Testis (tissue), 5 donors: ENCODE measurements at regions of chr9 and their contacts with region 1.

Region 1: DNA sequence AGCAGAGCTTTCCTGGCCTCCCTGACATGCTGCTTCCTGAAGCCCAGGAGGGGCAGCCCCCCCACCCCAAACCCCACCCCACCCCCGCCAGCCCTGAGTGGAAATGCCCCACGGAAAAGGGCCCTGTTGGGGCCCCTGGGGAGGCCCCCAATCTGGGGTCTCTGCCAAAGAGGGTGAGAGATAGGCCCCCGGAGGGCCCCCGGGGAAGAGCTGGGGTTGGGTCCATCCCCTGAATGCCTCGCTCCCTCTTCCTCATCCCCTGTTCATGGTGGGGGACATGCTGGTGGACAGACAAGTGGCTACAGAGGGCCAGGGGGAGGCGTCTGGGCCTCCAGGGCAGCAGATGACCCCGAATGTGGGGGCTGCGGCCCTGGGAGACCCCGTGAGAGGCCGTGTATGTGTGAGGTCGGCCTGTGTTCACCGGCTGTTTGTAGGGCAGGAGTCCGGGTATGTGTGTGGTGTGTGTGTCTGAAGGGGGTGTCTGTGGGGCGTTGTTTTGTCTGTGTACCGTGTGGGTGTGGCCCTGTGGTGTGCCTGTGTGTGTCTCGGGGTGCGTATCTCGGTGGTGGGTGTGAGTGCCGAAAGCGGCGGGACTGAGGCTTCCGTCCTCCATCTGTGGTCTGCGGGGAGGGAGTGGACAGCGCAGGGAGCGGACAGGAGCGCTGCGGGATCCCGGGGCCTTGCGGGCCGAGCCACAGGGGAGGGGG is 11.3 kb downstream of the C9orf50 start:
- DNase-seq: peak; percentile 59
- H3K4me3 ChIP-seq: peak overlapping the region; percentile 63 to 66
- H3K27ac ChIP-seq: peak overlapping the region; percentile 82 to 93
- H3K4me1 ChIP-seq: peaks cover 31% of the 10 kb centered on the region
- H3K27me3 ChIP-seq: no peaks in the 10 kb centered on the region
- CTCF ChIP-seq: no peak
- POLR2A ChIP-seq: no peak

Region 2: DNA sequence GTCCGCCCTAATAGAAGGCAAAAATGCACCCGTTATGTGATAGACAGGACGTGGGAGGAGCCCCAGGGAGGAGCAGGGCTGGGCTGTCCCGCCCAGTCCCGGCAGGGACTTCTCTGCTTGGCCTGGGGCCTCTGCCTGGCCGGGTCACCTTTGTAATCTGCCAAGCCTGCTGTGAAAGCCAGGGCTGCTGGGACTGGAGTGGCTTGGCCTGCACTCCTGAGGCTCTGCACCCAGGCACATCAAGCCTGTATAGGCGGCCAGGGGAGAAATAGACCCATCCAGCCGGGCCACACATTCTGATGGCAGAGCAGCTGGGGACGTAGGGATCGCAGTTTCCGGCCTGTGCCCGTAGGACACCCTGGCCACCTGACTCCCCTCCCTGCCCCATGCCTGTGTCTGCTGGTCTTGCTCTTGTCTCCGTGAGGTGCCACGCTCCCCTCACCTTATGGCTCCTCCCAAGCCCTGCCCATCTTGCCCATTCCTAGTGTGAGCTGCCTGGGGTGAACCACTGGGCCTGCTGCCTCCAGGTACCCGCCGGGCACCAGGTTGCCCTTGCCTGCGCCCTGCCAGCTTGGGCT is 981.1 kb before region 1 on chr9:
- intact Hi-C with region 1: no loop called
- DNase-seq: peak; percentile 63
- H3K4me3 ChIP-seq: no peak overlapping the region
- H3K27ac ChIP-seq: peak overlapping the region in 1 of 2 donors; percentile 40
- H3K4me1 ChIP-seq: peaks cover 19% of the 10 kb centered on the region
- H3K27me3 ChIP-seq: no peaks in the 10 kb centered on the region
- CTCF ChIP-seq: no peak
- POLR2A ChIP-seq: no peak

Region 3: GRCh38 chr9:129139993-129140396 is 469.6 kb before region 1 on chr9:
- intact Hi-C with region 1: loop called (anchors 5 kb)
- DNase-seq: peak; percentile 94
- H3K4me3 ChIP-seq: peak overlapping the region in 1 of 2 donors; percentile 9
- H3K27ac ChIP-seq: peak overlapping the region; percentile 96 to 98
- H3K4me1 ChIP-seq: peaks cover 71% of the 10 kb centered on the region
- H3K27me3 ChIP-seq: no peaks in the 10 kb centered on the region
- CTCF ChIP-seq: no peak
- POLR2A ChIP-seq: no peak

Region 4: GRCh38 chr9:129177791-129178559 is 431.7 kb before region 1 on chr9 and contains the start of gene IER5L:
- intact Hi-C with region 1: loop called (anchors 10 kb)
- DNase-seq: peak; percentile 99
- H3K4me3 ChIP-seq: peak within 1 kb of the TSS; percentile 81 to 93
- H3K27ac ChIP-seq: peak within 1 kb of the TSS; percentile 91 to 99
- H3K4me1 ChIP-seq: peaks cover 18% of the 10 kb centered on the region
- H3K27me3 ChIP-seq: no peaks in the 10 kb centered on the region
- CTCF ChIP-seq: no peak
- POLR2A ChIP-seq: peak; percentile 89
- total RNA-seq, gene IER5L: 12.6 to 25.4 TPM

Region 5: GRCh38 chr9:129495534-129496325 is 113.9 kb before region 1 on chr9:
- intact Hi-C with region 1: loop called (anchors 10 kb)
- DNase-seq: peak; percentile 97
- H3K4me3 ChIP-seq: peak overlapping the region; percentile 51 to 62
- H3K27ac ChIP-seq: peak overlapping the region; percentile 93 to 94
- H3K4me1 ChIP-seq: peaks cover 61% of the 10 kb centered on the region
- H3K27me3 ChIP-seq: no peaks in the 10 kb centered on the region
- CTCF ChIP-seq: no peak
- POLR2A ChIP-seq: no peak

Region 6: GRCh38 chr9:129932303-129933151 is 322.9 kb after region 1 on chr9:
- intact Hi-C with region 1: no loop called
- DNase-seq: no peak
- H3K4me3 ChIP-seq: no peak overlapping the region
- H3K27ac ChIP-seq: peak overlapping the region; percentile 55 to 76
- H3K4me1 ChIP-seq: peaks cover 20% of the 10 kb centered on the region
- H3K27me3 ChIP-seq: no peaks in the 10 kb centered on the region
- CTCF ChIP-seq: no peak
- POLR2A ChIP-seq: no peak